H1 (cell line): ENCODE measurements at regions of chr4 and their contacts with region 1.

Region 1: GRCh38 chr4:1154523-1155182 is 17.7 kb downstream of the SPON2 start:
- DNase-seq: no peak
- H3K4me3 ChIP-seq: no peak overlapping the region
- H3K27ac ChIP-seq: no peak overlapping the region
- H3K4me1 ChIP-seq: no peaks in the 10 kb centered on the region
- H3K27me3 ChIP-seq: no peaks in the 10 kb centered on the region; a peak in 1 of 7 replicates
- CTCF ChIP-seq: no peak
- EP300 ChIP-seq: no peak
- POLR2A ChIP-seq: no peak
- RAD21 ChIP-seq: no peak

Region 2: DNA sequence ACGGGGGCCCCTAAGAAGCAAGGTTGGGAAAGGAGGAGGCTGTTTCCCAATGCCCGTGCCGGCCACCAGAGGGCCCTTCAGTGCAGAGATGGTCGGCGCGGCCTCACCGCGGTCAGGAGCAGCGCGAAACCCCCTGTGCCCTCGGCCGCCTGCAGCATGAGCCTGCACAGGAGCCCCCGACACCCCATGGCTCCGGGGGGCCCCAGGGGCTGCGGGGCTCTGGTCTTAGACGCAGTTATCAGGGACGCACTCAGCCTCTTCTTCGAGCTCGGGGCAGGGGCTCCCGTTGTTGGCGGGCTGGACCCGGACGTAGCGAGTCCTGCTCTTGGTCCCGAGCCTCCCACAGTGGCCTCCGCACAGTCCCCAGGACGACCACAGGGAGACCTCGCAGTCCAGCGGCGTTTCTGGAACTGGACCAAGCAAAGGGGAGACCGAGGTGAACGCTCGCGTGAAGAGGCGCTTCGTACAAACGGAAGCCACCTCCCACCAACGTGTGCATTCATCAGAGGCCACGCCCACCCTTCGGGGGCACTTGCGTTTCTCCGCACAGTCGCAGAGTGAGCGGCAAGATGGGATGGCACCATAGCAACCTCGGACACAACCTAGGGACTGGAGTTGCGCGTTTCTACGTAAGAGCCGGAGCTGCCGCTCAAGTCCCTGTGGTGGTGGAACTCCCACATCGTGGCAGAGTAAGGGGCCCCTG is 12.7 kb after region 1 on chr4:
- CTCF ChIA-PET with region 1: interaction called, 18 read pairs
- POLR2A ChIA-PET with region 1: interaction called, 3 read pairs
- DNase-seq: peak; percentile 75 to 90
- H3K4me3 ChIP-seq: peak overlapping the region; percentile 30 to 75 (median 60)
- H3K27ac ChIP-seq: no peak overlapping the region
- H3K4me1 ChIP-seq: peaks cover 0 to 12% (median 4%) of the 10 kb centered on the region in 4 experiments; a peak in 4 of 7 replicates
- H3K27me3 ChIP-seq: peaks cover 40 to 53% (median 50%) of the 10 kb centered on the region in 4 experiments
- CTCF ChIP-seq: peak in 2 of 3 experiments; percentile 81 to 87; a peak in 3 of 4 replicates
- EP300 ChIP-seq: no peak
- POLR2A ChIP-seq: peak in 1 of 2 experiments; percentile 28; a peak in 2 of 3 replicates
- RAD21 ChIP-seq: peak; percentile 64 to 70

Region 3: GRCh38 chr4:1192091-1192492 is 37.4 kb after region 1 on chr4:
- CTCF ChIA-PET with region 1: no interaction called
- POLR2A ChIA-PET with region 1: no interaction called
- DNase-seq: no peak
- H3K4me3 ChIP-seq: no peak overlapping the region
- H3K27ac ChIP-seq: no peak overlapping the region
- H3K4me1 ChIP-seq: no peaks in the 10 kb centered on the region
- H3K27me3 ChIP-seq: no peaks in the 10 kb centered on the region; a peak in 2 of 7 replicates
- CTCF ChIP-seq: no peak
- EP300 ChIP-seq: no peak
- POLR2A ChIP-seq: no peak
- RAD21 ChIP-seq: no peak